Calu3 (cell line): ENCODE measurements at regions of chr14 and their contacts with region 1.

Region 1: GRCh38 chr14:38867561-38868150 is 235.4 kb downstream of the SEC23A start:
- DNase-seq: peak; percentile 77
- H3K4me3 Mint-ChIP-seq: no peak overlapping the region
- H3K27ac Mint-ChIP-seq: no peak overlapping the region
- H3K4me1 Mint-ChIP-seq: peaks cover 19% of the 10 kb centered on the region
- H3K27me3 Mint-ChIP-seq: peaks cover 20% of the 10 kb centered on the region
- CTCF ChIP-seq: peak; percentile 61

Region 2: DNA sequence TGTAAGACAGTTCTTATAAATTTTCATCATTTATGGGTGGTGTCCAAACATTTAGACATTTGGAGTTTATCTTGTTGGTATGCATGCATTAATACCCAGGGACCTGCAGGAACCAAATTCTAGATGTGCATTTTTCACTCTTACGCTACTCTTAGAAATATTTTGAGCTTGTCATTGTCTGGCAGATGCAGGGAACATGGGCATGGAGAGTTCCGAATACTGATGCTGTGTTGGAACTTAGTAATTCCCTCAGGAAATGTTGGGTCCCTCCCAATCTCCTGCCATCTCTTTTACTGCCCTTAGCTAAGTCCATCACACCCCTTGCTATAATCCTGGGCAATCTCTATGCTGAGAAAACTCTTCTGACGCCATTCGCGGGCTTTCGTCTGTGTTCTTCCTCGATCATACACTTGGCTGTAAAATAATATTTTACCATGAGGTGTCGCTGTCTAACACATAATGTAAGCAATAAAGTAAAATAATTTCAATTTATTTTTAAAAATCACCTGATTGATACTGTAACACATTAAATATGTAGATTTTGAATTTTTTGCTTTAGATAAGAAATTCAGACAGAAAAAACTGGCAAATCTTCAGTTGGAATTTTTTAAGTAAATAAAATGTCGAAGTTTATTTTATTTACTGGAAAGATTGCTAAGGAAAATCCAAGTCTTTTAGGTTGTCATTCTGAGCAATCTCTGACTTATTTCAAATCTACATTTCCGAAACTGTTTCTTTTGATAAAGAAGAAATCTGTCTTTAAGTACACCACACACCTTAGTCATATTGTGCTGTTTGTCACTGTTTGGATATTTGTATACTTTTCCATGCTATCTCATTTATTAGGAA is 964.1 kb before region 1 on chr14:
- CTCF ChIA-PET with region 1: no interaction called
- intact Hi-C with region 1: loop called (anchors 10 kb)
- DNase-seq: peak; percentile 10
- H3K4me3 Mint-ChIP-seq: peak overlapping the region; percentile 65
- H3K27ac Mint-ChIP-seq: no peak overlapping the region
- H3K4me1 Mint-ChIP-seq: peaks cover 5% of the 10 kb centered on the region
- H3K27me3 Mint-ChIP-seq: peaks cover 15% of the 10 kb centered on the region
- CTCF ChIP-seq: no peak

Region 3: DNA sequence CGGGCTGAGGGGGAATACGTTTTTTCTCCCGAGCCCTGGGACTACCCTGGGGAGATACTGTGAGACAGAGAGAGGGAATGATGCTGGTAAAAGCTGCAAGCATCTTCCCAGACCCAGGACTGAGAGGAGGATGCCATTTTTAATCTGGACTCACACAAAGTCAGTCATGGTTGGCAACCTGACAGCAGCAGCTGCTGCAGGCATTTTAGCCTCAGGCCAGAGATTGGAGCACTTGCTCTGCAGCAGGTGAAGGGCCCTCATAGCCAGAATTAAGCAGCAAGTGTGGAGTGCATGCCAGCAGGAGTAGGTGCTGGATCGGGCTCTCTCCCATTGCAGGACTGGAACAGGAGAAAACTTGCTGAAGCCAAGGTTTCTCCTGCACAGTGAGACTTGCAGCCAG is 250.7 kb before region 1 on chr14:
- CTCF ChIA-PET with region 1: no interaction called
- intact Hi-C with region 1: loop called (anchors 10 kb)
- DNase-seq: no peak
- H3K4me3 Mint-ChIP-seq: no peak overlapping the region
- H3K27ac Mint-ChIP-seq: no peak overlapping the region
- H3K4me1 Mint-ChIP-seq: no peaks in the 10 kb centered on the region
- H3K27me3 Mint-ChIP-seq: no peaks in the 10 kb centered on the region
- CTCF ChIP-seq: no peak

Region 4: GRCh38 chr14:38721822-38722431 is 145.7 kb before region 1 on chr14:
- CTCF ChIA-PET with region 1: interaction called, 12 read pairs
- intact Hi-C with region 1: loop called (anchors 1 kb)
- DNase-seq: peak; percentile 76
- H3K4me3 Mint-ChIP-seq: no peak overlapping the region
- H3K27ac Mint-ChIP-seq: no peak overlapping the region
- H3K4me1 Mint-ChIP-seq: peaks cover 9% of the 10 kb centered on the region
- H3K27me3 Mint-ChIP-seq: no peaks in the 10 kb centered on the region
- CTCF ChIP-seq: peak; percentile 45

Region 5: DNA sequence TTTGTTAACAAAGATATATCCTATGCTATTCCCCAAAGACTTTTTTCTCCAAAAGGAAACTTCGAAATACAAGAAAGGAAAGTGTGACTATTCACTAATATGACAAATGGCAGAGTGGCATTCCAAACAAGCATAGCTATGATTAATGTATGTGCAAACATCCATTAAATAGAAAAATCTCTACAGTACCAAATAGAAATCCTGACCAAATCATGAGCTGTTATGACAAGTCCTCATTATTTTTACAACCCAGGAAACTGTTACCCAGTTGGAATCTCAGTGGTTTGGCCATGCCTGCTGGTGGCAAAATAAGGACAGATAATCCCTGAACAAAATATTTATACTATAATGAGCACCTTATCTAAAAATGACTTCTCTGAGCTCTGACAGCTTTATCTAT is 33.2 kb after region 1 on chr14:
- CTCF ChIA-PET with region 1: no interaction called
- intact Hi-C with region 1: no loop called
- DNase-seq: no peak
- H3K4me3 Mint-ChIP-seq: no peak overlapping the region
- H3K27ac Mint-ChIP-seq: no peak overlapping the region
- H3K4me1 Mint-ChIP-seq: no peaks in the 10 kb centered on the region
- H3K27me3 Mint-ChIP-seq: no peaks in the 10 kb centered on the region
- CTCF ChIP-seq: no peak

Region 6: DNA sequence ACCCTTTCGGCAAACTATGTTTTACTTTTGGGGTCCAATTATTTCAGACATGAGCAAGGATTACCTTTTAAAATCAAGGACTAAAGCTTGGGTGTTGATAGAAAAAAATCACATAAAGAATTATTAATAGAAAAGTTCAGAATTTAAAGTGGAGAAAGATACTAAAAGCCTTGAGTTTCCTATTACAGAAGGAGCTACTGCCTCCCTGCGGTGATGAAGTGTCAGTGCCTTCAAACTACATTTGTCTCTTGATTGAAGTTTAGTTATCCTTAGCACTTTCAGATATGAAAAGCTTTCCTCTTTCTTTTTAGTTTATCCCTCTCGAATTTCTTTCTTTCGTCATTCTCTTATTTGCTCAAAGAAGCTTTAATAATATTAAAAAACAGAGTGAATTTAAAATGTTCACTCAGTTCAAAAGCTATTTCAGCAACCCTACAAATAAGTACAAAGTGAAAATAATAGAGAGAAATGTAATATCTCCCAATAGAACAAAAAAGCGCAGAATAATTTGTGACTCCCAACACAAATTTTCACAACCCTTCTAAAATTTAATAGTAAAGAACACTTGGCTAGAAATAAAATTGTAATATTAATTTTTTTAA is 147.8 kb after region 1 on chr14:
- CTCF ChIA-PET with region 1: interaction called, 5 read pairs
- intact Hi-C with region 1: loop called (anchors 1 kb)
- DNase-seq: peak; percentile 24
- H3K4me3 Mint-ChIP-seq: no peak overlapping the region
- H3K27ac Mint-ChIP-seq: no peak overlapping the region
- H3K4me1 Mint-ChIP-seq: no peaks in the 10 kb centered on the region
- H3K27me3 Mint-ChIP-seq: no peaks in the 10 kb centered on the region
- CTCF ChIP-seq: peak; percentile 49